Caco-2 (cell line): ENCODE measurements at regions of chr13 and their contacts with region 1.

Region 1: GRCh38 chr13:98775844-98776598 is 23.5 kb upstream of the SLC15A1 start:
- DNase-seq: peak; percentile 94 to 98
- H3K4me3 ChIP-seq: no peak overlapping the region
- H3K4me3 Mint-ChIP-seq: peak overlapping the region; percentile 25
- H3K27ac Mint-ChIP-seq: peak overlapping the region; percentile 96
- H3K4me1 ChIP-seq: peaks cover 42% of the 10 kb centered on the region
- H3K4me1 Mint-ChIP-seq: peaks cover 28% of the 10 kb centered on the region
- H3K27me3 ChIP-seq: no peaks in the 10 kb centered on the region
- H3K27me3 Mint-ChIP-seq: no peaks in the 10 kb centered on the region
- CTCF ChIP-seq: no peak

Region 2: GRCh38 chr13:98484289-98485219 is 291.5 kb before region 1 on chr13:
- CTCF ChIA-PET with region 1: no interaction called
- POLR2A ChIA-PET with region 1: no interaction called
- intact Hi-C with region 1: loop called (anchors 1 kb)
- DNase-seq: peak; percentile 88 to 89
- H3K4me3 ChIP-seq: peak overlapping the region; percentile 10; the same call in 1 of the 2 replicates
- H3K4me3 Mint-ChIP-seq: peak overlapping the region; percentile 66
- H3K27ac Mint-ChIP-seq: peak overlapping the region; percentile 94
- H3K4me1 ChIP-seq: peaks cover 35% of the 10 kb centered on the region
- H3K4me1 Mint-ChIP-seq: peaks cover 45% of the 10 kb centered on the region
- H3K27me3 ChIP-seq: no peaks in the 10 kb centered on the region
- H3K27me3 Mint-ChIP-seq: no peaks in the 10 kb centered on the region
- CTCF ChIP-seq: no peak

Region 3: GRCh38 chr13:98576963-98577822 is 198.8 kb before region 1 on chr13 and contains the start of gene STK24:
- CTCF ChIA-PET with region 1: no interaction called
- POLR2A ChIA-PET with region 1: no interaction called
- intact Hi-C with region 1: loop called (anchors 10 kb)
- DNase-seq: peak; percentile 65 to 92
- H3K4me3 ChIP-seq: peak within 1 kb of the TSS; percentile 92
- H3K4me3 Mint-ChIP-seq: peak within 1 kb of the TSS; percentile 95
- H3K27ac Mint-ChIP-seq: peak within 1 kb of the TSS; percentile 97
- H3K4me1 ChIP-seq: peaks cover 61% of the 10 kb centered on the region
- H3K4me1 Mint-ChIP-seq: peaks cover 63% of the 10 kb centered on the region
- H3K27me3 ChIP-seq: no peaks in the 10 kb centered on the region
- H3K27me3 Mint-ChIP-seq: no peaks in the 10 kb centered on the region
- CTCF ChIP-seq: no peak
- total RNA-seq, gene STK24: 244 and 253 TPM in 2 replicates

Region 4: GRCh38 chr13:98706446-98707110 is 69.4 kb before region 1 on chr13:
- CTCF ChIA-PET with region 1: no interaction called
- POLR2A ChIA-PET with region 1: no interaction called
- intact Hi-C with region 1: loop called (anchors 1 kb)
- DNase-seq: peak; percentile 70 to 84
- H3K4me3 ChIP-seq: no peak overlapping the region
- H3K4me3 Mint-ChIP-seq: peak overlapping the region; percentile 8
- H3K27ac Mint-ChIP-seq: peak overlapping the region; percentile 14
- H3K4me1 ChIP-seq: peaks cover 14% of the 10 kb centered on the region
- H3K4me1 Mint-ChIP-seq: peaks cover 12% of the 10 kb centered on the region
- H3K27me3 ChIP-seq: no peaks in the 10 kb centered on the region
- H3K27me3 Mint-ChIP-seq: no peaks in the 10 kb centered on the region
- CTCF ChIP-seq: no peak

Region 5: GRCh38 chr13:98741741-98742435 is 34.1 kb before region 1 on chr13:
- CTCF ChIA-PET with region 1: no interaction called
- POLR2A ChIA-PET with region 1: no interaction called
- intact Hi-C with region 1: loop called (anchors 5 kb)
- DNase-seq: peak in 1 of 2 experiments; percentile 22
- H3K4me3 ChIP-seq: no peak overlapping the region
- H3K4me3 Mint-ChIP-seq: no peak overlapping the region
- H3K27ac Mint-ChIP-seq: no peak overlapping the region
- H3K4me1 ChIP-seq: peaks cover 8% of the 10 kb centered on the region
- H3K4me1 Mint-ChIP-seq: peaks cover 5% of the 10 kb centered on the region
- H3K27me3 ChIP-seq: no peaks in the 10 kb centered on the region
- H3K27me3 Mint-ChIP-seq: no peaks in the 10 kb centered on the region
- CTCF ChIP-seq: no peak

Region 6: GRCh38 chr13:98751861-98752466 is 24.1 kb before region 1 on chr13:
- CTCF ChIA-PET with region 1: interaction called, 5 read pairs
- POLR2A ChIA-PET with region 1: interaction called, 6 read pairs
- intact Hi-C with region 1: loop called (anchors 1 kb)
- DNase-seq: peak in 1 of 2 experiments; percentile 55
- H3K4me3 ChIP-seq: peak overlapping the region; percentile 81
- H3K4me3 Mint-ChIP-seq: peak overlapping the region; percentile 74
- H3K27ac Mint-ChIP-seq: peak overlapping the region; percentile 62
- H3K4me1 ChIP-seq: peaks cover 12% of the 10 kb centered on the region
- H3K4me1 Mint-ChIP-seq: peaks cover 14% of the 10 kb centered on the region
- H3K27me3 ChIP-seq: no peaks in the 10 kb centered on the region
- H3K27me3 Mint-ChIP-seq: peaks cover 3% of the 10 kb centered on the region
- CTCF ChIP-seq: no peak

Region 7: DNA sequence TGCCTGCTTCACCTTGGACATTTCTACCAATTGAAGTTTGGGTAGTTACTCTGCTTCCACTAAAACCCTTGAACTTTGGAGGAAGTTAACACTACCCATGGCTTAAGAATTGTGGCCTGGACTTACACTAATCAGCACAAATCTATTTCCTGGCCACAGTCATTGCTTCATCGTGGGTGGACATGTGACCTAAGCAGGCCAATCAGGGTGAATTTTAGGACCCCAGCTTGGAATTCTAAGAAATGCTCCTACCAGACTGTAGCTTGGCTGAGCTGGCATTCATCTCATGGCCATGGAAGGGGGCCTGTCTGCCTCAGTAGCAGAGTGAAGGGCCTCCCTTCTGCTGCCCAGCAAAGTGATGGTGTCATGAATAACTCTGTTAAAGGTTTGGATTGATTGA is 34.7 kb after region 1 on chr13:
- CTCF ChIA-PET with region 1: no interaction called
- POLR2A ChIA-PET with region 1: no interaction called
- intact Hi-C with region 1: no loop called
- DNase-seq: no peak
- H3K4me3 ChIP-seq: no peak overlapping the region
- H3K4me3 Mint-ChIP-seq: no peak overlapping the region
- H3K27ac Mint-ChIP-seq: no peak overlapping the region
- H3K4me1 ChIP-seq: peaks cover 4% of the 10 kb centered on the region
- H3K4me1 Mint-ChIP-seq: no peaks in the 10 kb centered on the region
- H3K27me3 ChIP-seq: no peaks in the 10 kb centered on the region
- H3K27me3 Mint-ChIP-seq: no peaks in the 10 kb centered on the region
- CTCF ChIP-seq: no peak

Region 8: DNA sequence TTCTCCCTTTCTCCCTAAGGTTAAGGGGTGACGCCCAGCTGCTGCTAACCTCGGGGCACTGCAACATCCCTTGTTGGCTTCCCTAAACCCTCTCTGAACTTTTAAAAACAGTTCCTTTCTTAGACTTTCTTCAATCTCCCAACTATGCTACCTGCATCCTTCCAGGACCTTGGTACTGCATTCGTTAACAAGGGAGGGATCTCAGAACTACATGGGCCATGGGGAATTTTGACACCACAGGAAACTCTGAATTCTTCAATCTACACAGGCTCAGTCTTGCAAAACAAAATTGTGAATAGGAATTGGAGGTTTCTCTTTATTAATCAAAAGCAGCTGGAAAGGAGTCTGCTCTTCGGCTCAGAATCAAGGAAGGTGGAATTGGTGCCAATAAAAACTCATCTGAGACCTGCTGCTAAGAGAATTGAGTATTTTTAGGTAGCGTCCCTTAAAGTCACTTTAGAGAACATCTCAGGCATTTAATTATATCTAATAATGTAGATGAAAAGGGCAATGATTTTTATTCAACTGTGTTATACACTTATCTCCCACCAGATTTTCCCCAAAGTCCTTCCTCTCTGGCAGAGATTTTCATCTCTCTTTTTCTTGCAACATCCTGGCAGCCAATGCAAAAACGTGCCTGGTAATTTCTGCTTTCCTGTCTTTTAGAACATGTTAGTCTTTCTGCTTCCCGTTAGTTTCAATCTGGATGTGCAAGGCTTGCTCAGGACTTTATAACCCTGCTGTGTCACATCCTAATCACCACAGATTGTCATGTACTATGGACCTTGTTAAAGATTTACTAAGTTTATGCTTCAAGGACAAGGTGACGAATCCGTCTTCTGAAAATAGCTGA is 45.6 kb after region 1 on chr13:
- CTCF ChIA-PET with region 1: no interaction called
- POLR2A ChIA-PET with region 1: no interaction called
- intact Hi-C with region 1: loop called (anchors 1 kb)
- DNase-seq: peak; percentile 54 to 59
- H3K4me3 ChIP-seq: no peak overlapping the region
- H3K4me3 Mint-ChIP-seq: peak overlapping the region; percentile 32
- H3K27ac Mint-ChIP-seq: peak overlapping the region; percentile 10
- H3K4me1 ChIP-seq: peaks cover 31% of the 10 kb centered on the region
- H3K4me1 Mint-ChIP-seq: peaks cover 17% of the 10 kb centered on the region
- H3K27me3 ChIP-seq: no peaks in the 10 kb centered on the region
- H3K27me3 Mint-ChIP-seq: no peaks in the 10 kb centered on the region
- CTCF ChIP-seq: no peak